ENCODE measurements at regions of chr1 and their contacts with region 1.

Region 1: GRCh38 chr1:211514030-211514754 is 22.2 kb upstream of the RD3 start:
- DNase-seq: peak; percentile 66
- ATAC-seq: peak; percentile 87
- H3K4me3 ChIP-seq: peak overlapping the region in 1 of 2 experiments; percentile 36; a peak in 2 of 4 replicates
- H3K27ac ChIP-seq: peak overlapping the region; percentile 70
- H3K4me1 ChIP-seq: peaks cover 22% of the 10 kb centered on the region
- H3K27me3 ChIP-seq: no peaks in the 10 kb centered on the region
- CTCF ChIP-seq: peak; percentile 91

Region 2: DNA sequence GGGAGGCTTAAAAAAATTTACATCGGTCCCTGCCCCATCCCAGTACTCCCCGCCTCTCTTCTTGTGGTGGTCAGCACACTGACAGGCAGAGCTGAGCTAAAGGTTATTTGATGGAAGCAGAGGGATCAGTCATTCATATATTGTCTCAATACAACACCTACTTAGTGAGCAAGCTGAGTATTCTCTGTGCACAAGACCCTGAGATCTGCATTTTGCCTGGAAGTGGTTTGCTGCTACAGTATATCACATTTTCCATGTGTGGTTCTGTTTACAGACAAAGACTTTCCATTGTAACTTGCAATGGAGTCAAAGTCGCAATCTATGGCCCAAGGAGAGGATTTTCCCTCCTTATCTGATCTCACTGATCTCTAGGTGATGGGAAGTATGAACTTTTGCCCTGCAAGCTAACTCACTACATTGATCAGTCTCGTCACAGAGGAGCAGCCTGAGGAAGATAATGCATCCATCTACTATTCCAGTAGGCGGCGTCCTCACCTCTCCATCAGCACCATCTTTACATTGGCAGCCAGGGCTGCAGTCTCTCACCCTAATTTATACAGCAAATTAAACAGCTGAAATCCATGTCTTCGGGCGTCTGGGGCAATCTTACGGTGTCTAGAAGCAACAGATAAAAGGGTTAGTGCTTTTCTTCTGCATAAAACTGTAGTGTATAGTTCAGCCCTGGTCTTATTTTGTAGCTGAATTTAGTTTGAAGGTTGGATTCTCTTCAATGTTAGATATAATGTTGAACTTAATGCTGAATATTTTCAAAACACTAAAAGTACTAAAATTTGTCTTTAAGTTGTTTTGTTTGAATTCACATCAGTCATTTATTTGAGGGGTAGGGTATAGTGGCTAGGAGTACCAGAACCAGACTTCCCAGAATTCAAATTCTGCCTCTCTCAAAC is 190.8 kb before region 1 on chr1:
- CTCF ChIA-PET with region 1: interaction called, 6 read pairs
- POLR2A ChIA-PET with region 1: no interaction called
- in situ Hi-C with region 1: no loop called
- intact Hi-C with region 1: loop called (anchors 1 kb)
- DNase-seq: peak; percentile 60
- ATAC-seq: peak; percentile 85
- H3K4me3 ChIP-seq: no peak overlapping the region
- H3K27ac ChIP-seq: no peak overlapping the region
- H3K4me1 ChIP-seq: peaks cover 7% of the 10 kb centered on the region
- H3K27me3 ChIP-seq: no peaks in the 10 kb centered on the region
- CTCF ChIP-seq: peak; percentile 96

Region 3: DNA sequence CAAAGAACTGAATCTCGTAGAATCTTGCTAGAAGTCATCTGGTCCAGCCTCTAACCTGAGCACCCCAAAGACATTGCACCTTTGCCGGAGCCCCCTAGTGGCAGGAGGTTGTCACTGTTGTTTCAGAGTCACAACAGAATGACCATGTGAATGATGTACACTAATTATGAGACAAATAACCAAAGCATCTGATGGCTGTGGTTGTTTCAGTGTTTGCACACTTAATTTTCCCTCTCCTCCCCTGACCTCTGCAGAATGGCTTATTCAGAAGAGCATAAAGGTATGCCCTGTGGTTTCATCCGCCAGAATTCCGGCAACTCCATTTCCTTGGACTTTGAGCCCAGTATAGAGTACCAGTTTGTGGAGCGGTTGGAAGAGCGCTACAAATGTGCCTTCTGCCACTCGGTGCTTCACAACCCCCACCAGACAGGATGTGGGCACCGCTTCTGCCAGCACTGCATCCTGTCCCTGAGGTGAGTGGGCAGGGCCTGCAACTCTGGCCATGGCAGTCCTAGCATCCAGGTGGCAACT is 161.1 kb before region 1 on chr1:
- CTCF ChIA-PET with region 1: interaction called, 14 read pairs
- POLR2A ChIA-PET with region 1: no interaction called
- in situ Hi-C with region 1: no loop called
- intact Hi-C with region 1: no loop called
- DNase-seq: no peak
- ATAC-seq: peak; percentile 76
- H3K4me3 ChIP-seq: no peak overlapping the region
- H3K27ac ChIP-seq: no peak overlapping the region
- H3K4me1 ChIP-seq: no peaks in the 10 kb centered on the region
- H3K27me3 ChIP-seq: no peaks in the 10 kb centered on the region
- CTCF ChIP-seq: peak; percentile 83

Region 4: GRCh38 chr1:211469938-211470529 is 44.2 kb before region 1 on chr1:
- CTCF ChIA-PET with region 1: no interaction called
- POLR2A ChIA-PET with region 1: interaction called, 4 read pairs
- in situ Hi-C with region 1: no loop called
- intact Hi-C with region 1: loop called (anchors 2 kb)
- DNase-seq: peak; percentile 50
- ATAC-seq: peak; percentile 99
- H3K4me3 ChIP-seq: peak overlapping the region in 1 of 2 experiments; percentile 21; a peak in 1 of 4 replicates
- H3K27ac ChIP-seq: no peak overlapping the region
- H3K4me1 ChIP-seq: peaks cover 5% of the 10 kb centered on the region; the same call in 1 of the 2 replicates
- H3K27me3 ChIP-seq: peaks cover 3% of the 10 kb centered on the region; the same call in 1 of the 2 replicates
- CTCF ChIP-seq: peak; percentile 94

Region 5: GRCh38 chr1:211578640-211579433 is 64.6 kb after region 1 on chr1 and contains the start of gene SLC30A1:
- CTCF ChIA-PET with region 1: no interaction called
- POLR2A ChIA-PET with region 1: no interaction called
- in situ Hi-C with region 1: no loop called
- intact Hi-C with region 1: no loop called
- DNase-seq: peak; percentile 68
- ATAC-seq: peak; percentile 93
- H3K4me3 ChIP-seq: peak within 1 kb of the TSS; percentile 70 to 94
- H3K27ac ChIP-seq: peak within 1 kb of the TSS; percentile 83
- H3K4me1 ChIP-seq: peaks cover 28% of the 10 kb centered on the region
- H3K27me3 ChIP-seq: no peaks in the 10 kb centered on the region
- CTCF ChIP-seq: no peak
- total RNA-seq, gene SLC30A1: 34.5 TPM

Region 6: GRCh38 chr1:211654838-211655787 is 140.9 kb after region 1 on chr1:
- CTCF ChIA-PET with region 1: no interaction called
- POLR2A ChIA-PET with region 1: no interaction called
- in situ Hi-C with region 1: no loop called
- intact Hi-C with region 1: loop called (anchors 1 kb)
- DNase-seq: no peak
- ATAC-seq: peak; percentile 94
- H3K4me3 ChIP-seq: no peak overlapping the region
- H3K27ac ChIP-seq: peak overlapping the region; percentile 36
- H3K4me1 ChIP-seq: peaks cover 15% of the 10 kb centered on the region
- H3K27me3 ChIP-seq: no peaks in the 10 kb centered on the region
- CTCF ChIP-seq: peak; percentile 95

Measured in Panc1 (cell line).